ENCODE measurements at regions of chr1 and their contacts with region 1.

Region 1: DNA sequence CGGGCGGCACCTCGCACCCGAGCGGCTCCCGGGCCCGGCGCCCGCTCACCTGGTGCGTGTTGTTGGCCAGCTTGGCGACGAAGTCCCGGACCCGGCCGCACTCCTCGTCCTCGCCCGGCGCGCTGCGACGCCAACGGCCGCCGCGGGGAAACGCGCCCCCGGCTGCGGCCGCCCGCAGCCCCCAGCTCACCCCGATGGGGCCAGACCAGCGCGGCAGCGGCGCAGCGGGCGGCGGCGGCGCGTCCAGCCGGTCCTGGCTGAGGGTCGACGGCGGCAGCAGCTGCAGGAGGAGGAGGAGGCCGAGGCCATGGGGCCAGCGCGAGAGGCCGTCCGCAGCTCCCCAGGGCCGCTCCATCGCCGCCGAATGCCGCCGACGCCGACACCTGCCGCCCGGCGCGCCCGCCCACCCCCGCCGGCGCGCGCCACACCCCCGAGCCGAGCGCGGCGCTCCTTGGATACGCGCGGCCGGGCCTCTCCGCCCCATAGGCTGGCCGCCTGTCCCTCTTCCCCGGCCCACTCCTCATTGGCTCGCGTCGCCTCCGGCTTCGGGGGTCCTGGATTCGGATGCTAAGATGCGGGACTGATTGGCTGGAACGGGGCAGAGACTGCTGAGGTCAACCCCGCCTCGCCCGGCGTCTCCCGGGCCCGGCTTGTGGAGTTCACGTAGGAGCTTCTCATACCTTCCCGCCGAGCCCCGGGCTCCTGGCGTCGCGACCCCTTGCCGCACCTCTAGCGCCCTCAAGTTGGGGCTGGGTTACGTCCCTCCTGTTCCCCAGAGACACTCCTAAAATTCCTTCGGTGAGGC is at the start of gene SORT1:
- DNase-seq: peak; percentile 90
- ATAC-seq: peak; percentile 92
- total RNA-seq, gene SORT1: 121 TPM

Region 2: DNA sequence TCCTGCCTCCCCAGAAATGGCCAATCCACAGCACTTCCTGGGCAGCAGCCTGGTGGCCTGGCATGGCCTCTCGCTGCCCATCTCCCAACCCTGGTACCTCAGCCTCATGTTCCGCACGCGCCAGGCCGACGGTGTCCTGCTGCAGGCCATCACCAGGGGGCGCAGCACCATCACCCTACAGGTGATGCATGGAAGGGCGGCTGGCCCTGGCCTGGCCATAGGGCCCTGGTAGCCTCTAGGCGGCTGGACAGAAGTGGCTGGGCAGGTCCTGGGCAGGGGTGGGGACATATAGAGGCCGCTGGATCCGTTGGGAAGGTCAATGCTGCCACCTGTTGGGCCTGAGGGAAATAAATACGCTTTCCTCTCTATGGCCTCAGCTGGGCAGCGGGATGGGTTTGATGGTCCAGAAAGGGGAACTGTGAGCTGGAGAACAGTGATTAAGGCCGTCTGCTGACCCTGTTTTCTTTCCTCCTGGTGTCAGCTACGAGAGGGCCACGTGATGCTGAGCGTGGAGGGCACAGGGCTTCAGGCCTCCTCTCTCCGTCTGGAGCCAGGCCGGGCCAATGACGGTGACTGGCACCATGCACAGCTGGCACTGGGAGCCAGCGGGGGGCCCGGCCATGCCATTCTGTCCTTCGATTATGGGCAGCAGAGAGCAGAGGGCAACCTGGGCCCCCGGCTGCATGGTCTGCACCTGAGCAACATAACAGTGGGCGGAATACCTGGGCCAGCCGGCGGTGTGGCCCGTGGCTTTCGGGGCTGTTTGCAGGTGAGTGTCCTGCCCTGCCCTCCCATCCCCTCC is 133.9 kb before region 1 on chr1:
- intact Hi-C with region 1: loop called (anchors 1 kb)
- DNase-seq: peak; percentile 93
- ATAC-seq: peak; percentile 82

Region 3: GRCh38 chr1:109277434-109278204 is 120.1 kb before region 1 on chr1:
- intact Hi-C with region 1: loop called (anchors 1 kb)
- DNase-seq: peak; percentile 86
- ATAC-seq: peak; percentile 68

Region 4: GRCh38 chr1:109350655-109351054 is 47.1 kb before region 1 on chr1:
- intact Hi-C with region 1: loop called (anchors 5 kb)
- DNase-seq: no peak
- ATAC-seq: no peak

Measured in Right ventricle myocardium inferior (tissue), 1 donor.